ENCODE measurements at regions of chr11 and their contacts with region 1.

Region 1: DNA sequence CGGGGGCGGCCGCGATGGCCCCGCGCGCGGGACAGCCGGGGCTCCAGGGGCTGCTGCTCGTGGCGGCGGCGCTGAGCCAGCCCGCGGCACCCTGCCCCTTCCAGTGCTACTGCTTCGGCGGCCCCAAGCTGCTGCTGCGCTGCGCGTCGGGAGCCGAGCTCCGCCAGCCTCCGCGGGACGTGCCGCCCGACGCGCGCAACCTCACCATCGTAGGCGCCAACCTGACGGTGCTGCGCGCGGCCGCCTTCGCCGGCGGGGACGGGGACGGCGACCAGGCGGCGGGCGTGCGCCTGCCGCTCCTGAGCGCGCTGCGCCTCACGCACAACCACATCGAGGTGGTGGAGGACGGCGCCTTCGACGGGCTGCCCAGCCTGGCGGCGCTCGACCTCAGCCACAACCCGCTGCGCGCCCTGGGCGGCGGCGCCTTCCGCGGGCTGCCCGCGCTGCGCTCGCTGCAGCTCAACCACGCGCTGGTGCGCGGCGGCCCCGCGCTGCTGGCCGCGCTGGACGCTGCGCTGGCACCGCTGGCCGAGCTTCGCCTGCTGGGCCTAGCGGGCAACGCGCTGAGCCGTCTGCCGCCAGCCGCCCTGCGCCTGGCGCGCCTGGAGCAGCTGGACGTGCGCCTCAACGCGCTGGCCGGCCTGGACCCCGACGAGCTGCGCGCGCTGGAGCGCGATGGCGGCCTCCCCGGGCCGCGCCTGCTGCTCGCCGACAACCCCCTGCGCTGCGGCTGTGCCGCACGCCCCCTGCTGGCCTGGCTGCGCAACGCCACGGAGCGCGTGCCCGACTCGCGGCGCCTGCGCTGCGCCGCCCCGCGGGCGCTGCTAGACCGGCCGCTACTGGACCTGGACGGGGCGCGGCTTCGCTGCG is 697 bp downstream of the TPBGL start:
- DNase-seq: peak; percentile 77 to 81
- H3K4me3 ChIP-seq: peak overlapping the region in 1 of 3 donors; percentile 27
- H3K27ac ChIP-seq: no peak overlapping the region
- H3K4me1 ChIP-seq: peaks cover 9 to 15% of the 10 kb centered on the region in 2 donors
- H3K27me3 ChIP-seq: no peaks in the 10 kb centered on the region
- CTCF ChIP-seq: peak in 4 of 6 experiments; percentile 81 to 100 (median 99)
- POLR2A ChIP-seq: no peak

Region 2: DNA sequence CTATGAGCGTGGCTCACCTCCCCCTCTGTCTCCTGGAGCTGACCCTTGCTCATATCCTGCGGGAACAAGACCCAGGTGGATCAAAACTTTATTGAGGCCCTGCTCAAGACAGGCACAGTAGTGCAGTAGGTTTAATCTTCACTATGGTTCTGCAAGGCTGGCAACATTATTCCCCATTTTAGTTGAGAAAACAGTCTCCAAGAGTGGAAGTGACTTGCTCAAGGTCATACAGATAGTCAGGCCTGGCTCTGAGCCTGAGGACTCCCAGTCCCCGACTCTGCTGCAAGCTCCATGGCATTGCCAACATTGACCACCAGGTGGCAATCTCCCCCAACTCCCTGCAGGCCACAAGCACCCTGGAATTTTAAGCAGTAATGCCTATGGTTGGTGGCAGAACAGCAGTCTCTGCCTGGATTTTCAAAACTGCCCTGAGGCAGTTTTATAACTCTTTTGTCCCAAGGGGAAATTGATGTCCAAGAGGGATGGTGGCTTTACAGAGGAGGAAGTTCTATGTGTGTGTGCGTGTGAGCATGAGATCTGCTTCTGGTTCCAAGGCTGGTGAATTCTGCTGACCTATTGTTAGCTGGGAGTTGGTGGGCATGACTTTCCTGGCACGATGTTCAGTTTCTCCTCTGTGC is 218.4 kb before region 1 on chr11:
- intact Hi-C with region 1: loop called (anchors 10 kb)
- DNase-seq: peak; percentile 78 to 85
- H3K4me3 ChIP-seq: no peak overlapping the region
- H3K27ac ChIP-seq: peak overlapping the region in 2 of 3 donors; percentile 47 to 76
- H3K4me1 ChIP-seq: peaks cover 11 to 17% of the 10 kb centered on the region in 2 donors
- H3K27me3 ChIP-seq: no peaks in the 10 kb centered on the region
- CTCF ChIP-seq: peak; percentile 81 to 94 (median 84)
- POLR2A ChIP-seq: no peak

Region 3: DNA sequence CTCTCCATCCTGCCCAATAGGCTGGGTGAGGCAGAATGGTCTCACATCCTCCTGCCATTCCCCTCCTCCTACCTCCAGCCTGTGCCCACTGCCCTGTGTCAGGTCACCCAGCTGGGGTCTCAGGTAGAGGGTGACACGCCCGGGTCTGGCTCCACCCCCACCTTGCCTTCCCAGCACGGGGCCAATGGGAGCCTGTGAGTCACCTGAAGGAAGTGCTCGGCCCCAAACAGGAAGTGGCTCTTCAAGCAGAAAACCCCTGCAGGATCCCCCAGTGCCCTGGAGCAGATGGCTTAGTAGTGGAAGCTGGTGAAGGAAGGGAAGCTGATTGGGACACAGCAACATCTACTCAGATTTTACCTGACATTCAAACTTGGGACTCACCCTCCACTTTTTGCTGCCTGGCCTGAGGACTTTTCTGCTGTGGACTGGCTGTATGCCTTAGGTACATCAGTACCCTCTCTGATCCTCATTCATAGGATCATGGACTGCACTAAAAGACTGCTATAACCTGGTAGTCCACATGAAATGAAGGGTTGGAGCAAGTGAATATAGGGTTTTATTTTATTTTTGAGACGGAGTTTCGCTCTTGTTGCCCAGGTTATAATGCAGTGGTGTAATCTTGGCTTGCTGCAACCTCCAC is 251.0 kb after region 1 on chr11:
- intact Hi-C with region 1: no loop called
- DNase-seq: no peak
- H3K4me3 ChIP-seq: no peak overlapping the region
- H3K27ac ChIP-seq: no peak overlapping the region
- H3K4me1 ChIP-seq: no peaks in the 10 kb centered on the region
- H3K27me3 ChIP-seq: no peaks in the 10 kb centered on the region
- CTCF ChIP-seq: no peak
- POLR2A ChIP-seq: no peak

Region 4: GRCh38 chr11:75667831-75668450 is 426.7 kb after region 1 on chr11:
- intact Hi-C with region 1: no loop called
- DNase-seq: peak; percentile 66
- H3K4me3 ChIP-seq: peak overlapping the region; percentile 25 to 59 (median 49)
- H3K27ac ChIP-seq: peak overlapping the region in 2 of 3 donors; percentile 55 to 63
- H3K4me1 ChIP-seq: peaks cover 8 to 15% of the 10 kb centered on the region in 2 donors
- H3K27me3 ChIP-seq: no peaks in the 10 kb centered on the region
- CTCF ChIP-seq: no peak
- POLR2A ChIP-seq: no peak